Heart right ventricle (tissue), 16 donors: ENCODE measurements at regions of chr11 and their contacts with region 1.

Region 1: GRCh38 chr11:98495601-98496000 is 525.1 kb upstream of the CNTN5 start:
- DNase-seq: no peak
- ATAC-seq: no peak
- H3K4me3 ChIP-seq: no peak overlapping the region
- H3K27ac ChIP-seq: no peak overlapping the region
- H3K4me1 ChIP-seq: no peaks in the 10 kb centered on the region
- H3K27me3 ChIP-seq: no peaks in the 10 kb centered on the region
- CTCF ChIP-seq: no peak

Region 2: GRCh38 chr11:97973352-97973857 is 522.2 kb before region 1 on chr11:
- intact Hi-C with region 1: no loop called
- DNase-seq: no peak
- ATAC-seq: no peak
- H3K4me3 ChIP-seq: no peak overlapping the region
- H3K27ac ChIP-seq: no peak overlapping the region
- H3K4me1 ChIP-seq: no peaks in the 10 kb centered on the region
- H3K27me3 ChIP-seq: no peaks in the 10 kb centered on the region
- CTCF ChIP-seq: no peak

Region 3: DNA sequence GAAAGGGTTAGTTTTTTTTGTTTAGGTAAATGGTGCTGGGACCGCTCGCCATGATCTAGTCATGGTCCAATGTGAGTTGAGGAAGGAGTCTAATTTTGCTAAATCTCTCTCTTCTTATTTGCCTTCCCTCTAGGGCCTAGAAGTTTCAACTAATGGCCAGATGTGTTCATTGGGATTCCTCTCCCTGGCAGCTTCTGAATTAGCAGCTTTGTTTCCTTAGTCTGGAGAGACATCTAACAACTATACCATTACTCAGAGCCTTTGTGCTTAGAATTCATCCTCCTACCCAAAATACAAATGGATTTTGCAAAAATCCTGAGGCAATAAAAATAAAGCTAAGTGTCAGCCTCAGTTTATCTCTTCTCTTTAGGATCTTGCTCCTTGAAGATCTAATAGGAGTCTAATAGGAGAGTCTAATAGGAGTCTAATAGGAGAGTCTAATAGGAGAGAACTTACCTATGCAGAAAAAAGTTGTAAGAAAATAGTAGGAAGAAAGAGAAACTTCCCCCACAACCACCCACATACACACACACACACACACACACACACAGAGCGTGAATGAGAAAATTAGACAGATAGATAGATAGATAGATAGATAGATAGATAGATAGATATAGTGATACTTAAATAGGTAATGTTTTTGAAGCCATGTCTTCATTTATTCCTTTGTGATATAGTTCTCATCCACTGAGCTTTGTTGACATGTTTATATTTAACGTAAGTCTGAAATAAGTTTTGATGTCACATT is 455.4 kb before region 1 on chr11:
- intact Hi-C with region 1: loop called in 1 of 10 experiments (anchors 5 kb)
- DNase-seq: no peak
- ATAC-seq: no peak
- H3K4me3 ChIP-seq: no peak overlapping the region
- H3K27ac ChIP-seq: no peak overlapping the region
- H3K4me1 ChIP-seq: peaks cover 0 to 3% (median 0%) of the 10 kb centered on the region in 9 donors
- H3K27me3 ChIP-seq: no peaks in the 10 kb centered on the region
- CTCF ChIP-seq: no peak